Panc1 (cell line): ENCODE measurements at regions of chr14 and their contacts with region 1.

Region 1: GRCh38 chr14:90368946-90369721 is 27.7 kb upstream of the CALM1 start:
- DNase-seq: no peak
- ATAC-seq: peak; percentile 53
- H3K4me3 ChIP-seq: no peak overlapping the region
- H3K27ac ChIP-seq: no peak overlapping the region
- H3K4me1 ChIP-seq: no peaks in the 10 kb centered on the region
- H3K27me3 ChIP-seq: no peaks in the 10 kb centered on the region
- CTCF ChIP-seq: no peak; the same call in 1 of the 2 replicates

Region 2: GRCh38 chr14:90319173-90319572 is 50.0 kb before region 1 on chr14:
- CTCF ChIA-PET with region 1: no interaction called
- POLR2A ChIA-PET with region 1: interaction called, 11 read pairs
- in situ Hi-C with region 1: no loop called
- intact Hi-C with region 1: no loop called
- DNase-seq: no peak
- ATAC-seq: no peak
- H3K4me3 ChIP-seq: no peak overlapping the region
- H3K27ac ChIP-seq: no peak overlapping the region
- H3K4me1 ChIP-seq: no peaks in the 10 kb centered on the region
- H3K27me3 ChIP-seq: no peaks in the 10 kb centered on the region
- CTCF ChIP-seq: no peak